ENCODE measurements at regions of chr4 and their contacts with region 1.

Region 1: DNA sequence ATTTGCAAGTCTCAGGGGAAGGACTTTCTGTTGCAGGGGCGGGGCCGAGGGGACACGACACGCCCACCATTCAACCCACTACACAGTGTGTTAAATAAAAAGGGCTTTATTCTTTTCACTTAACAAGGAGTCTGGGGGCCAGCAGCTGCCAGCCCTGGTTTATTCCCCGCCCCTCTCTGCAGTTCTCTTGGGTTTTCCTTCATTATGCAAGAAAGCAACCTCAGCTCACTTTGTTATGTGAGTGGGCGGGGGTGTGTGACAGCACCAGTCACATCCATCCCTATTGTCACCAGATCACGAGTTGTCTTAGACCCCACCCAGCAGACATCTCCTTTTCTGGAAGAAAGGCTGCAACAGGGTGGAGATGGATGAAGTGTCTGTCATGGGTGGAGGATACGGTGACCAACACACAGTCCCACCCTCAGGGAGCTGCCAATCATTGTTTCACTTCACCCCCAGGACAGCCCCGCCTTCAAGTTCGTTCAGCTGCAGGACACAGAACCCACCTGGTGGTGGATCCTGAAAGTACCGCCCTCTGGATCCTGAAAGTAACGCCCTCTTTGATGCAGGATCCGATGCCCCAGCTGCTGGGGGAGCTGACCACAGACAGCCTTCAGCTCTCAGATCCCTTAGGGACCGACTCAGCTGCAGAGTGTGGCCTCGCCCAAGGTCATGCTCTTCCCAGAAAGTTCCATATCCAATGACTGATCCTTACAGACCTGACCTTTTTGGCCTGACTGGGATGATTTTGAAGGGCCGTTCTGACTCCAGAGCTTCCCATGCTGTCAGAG is 79.6 kb downstream of the SMIM20 start:
- DNase-seq: peak; percentile 96
- ATAC-seq: peak; percentile 94
- H3K4me3 Mint-ChIP-seq: peak overlapping the region; percentile 50
- H3K27ac Mint-ChIP-seq: peak overlapping the region; percentile 100
- H3K4me1 Mint-ChIP-seq: peaks cover 23% of the 10 kb centered on the region
- H3K27me3 Mint-ChIP-seq: peaks cover 4% of the 10 kb centered on the region; the same call in 1 of the 2 replicates
- CTCF ChIP-seq: peak; percentile 62; the same call in 1 of the 2 replicates

Region 2: GRCh38 chr4:25842229-25842845 is 151.3 kb before region 1 on chr4:
- CTCF ChIA-PET with region 1: interaction called, 14 read pairs
- POLR2A ChIA-PET with region 1: no interaction called
- DNase-seq: peak; percentile 55
- ATAC-seq: peak; percentile 70
- H3K4me3 Mint-ChIP-seq: no peak overlapping the region
- H3K27ac Mint-ChIP-seq: peak overlapping the region; percentile 90
- H3K4me1 Mint-ChIP-seq: peaks cover 54% of the 10 kb centered on the region
- H3K27me3 Mint-ChIP-seq: no peaks in the 10 kb centered on the region
- CTCF ChIP-seq: no peak

Region 3: DNA sequence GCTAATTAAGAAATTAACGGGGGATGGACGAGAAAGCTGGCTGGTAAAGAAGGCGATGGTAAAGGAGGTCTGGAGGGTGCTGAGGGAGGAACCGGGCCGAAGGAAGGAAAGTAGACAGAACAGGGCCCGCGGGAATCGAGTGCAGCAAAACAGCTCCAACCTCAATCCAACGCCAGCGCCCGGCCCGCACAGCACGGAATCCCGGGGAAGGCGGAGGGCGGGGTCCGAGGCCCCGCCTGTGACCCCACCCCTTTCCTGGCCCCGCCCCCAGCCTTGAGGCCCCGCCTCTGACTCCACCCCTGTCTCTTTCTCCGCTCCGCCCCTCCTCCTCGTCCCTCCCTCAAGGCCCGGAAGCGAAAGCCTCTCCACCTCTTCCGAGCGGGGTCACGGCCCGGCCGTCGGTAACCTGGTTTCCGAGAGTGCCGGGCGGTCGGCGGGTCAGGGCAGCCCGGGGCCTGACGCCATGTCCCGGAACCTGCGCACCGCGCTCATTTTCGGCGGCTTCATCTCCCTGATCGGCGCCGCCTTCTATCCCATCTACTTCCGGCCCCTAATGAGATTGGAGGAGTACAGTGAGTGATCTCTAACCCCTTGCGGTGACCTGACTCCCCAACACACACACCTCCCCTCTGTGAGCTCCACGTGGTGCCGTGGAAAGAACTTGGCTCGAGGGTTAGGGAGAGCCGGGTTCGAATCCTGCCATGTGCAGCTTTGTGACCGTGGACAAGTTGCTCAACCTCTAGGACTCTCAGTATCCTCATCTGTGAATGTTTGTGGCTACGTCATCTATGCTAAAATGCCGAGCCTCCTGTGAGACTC is 79.5 kb before region 1 on chr4 and contains the start of gene SMIM20:
- CTCF ChIA-PET with region 1: interaction called, 11 read pairs
- POLR2A ChIA-PET with region 1: interaction called, 4 read pairs
- DNase-seq: peak; percentile 84
- ATAC-seq: peak; percentile 95
- H3K4me3 Mint-ChIP-seq: peak within 1 kb of the TSS; percentile 98
- H3K27ac Mint-ChIP-seq: peak within 1 kb of the TSS; percentile 99
- H3K4me1 Mint-ChIP-seq: peaks cover 19% of the 10 kb centered on the region
- H3K27me3 Mint-ChIP-seq: peaks cover 31% of the 10 kb centered on the region
- CTCF ChIP-seq: no peak
- total RNA-seq, gene SMIM20: 39.4 to 48.5 TPM (median 45.3 TPM) in 3 replicates

Region 4: GRCh38 chr4:25970226-25970675 is 23.3 kb before region 1 on chr4:
- CTCF ChIA-PET with region 1: interaction called, 17 read pairs
- POLR2A ChIA-PET with region 1: interaction called, 4 read pairs
- DNase-seq: no peak
- ATAC-seq: peak; percentile 47
- H3K4me3 Mint-ChIP-seq: no peak overlapping the region
- H3K27ac Mint-ChIP-seq: no peak overlapping the region
- H3K4me1 Mint-ChIP-seq: peaks cover 18% of the 10 kb centered on the region
- H3K27me3 Mint-ChIP-seq: peaks cover under 1% of the 10 kb centered on the region
- CTCF ChIP-seq: no peak

Region 5: GRCh38 chr4:26161030-26161824 is 167.6 kb after region 1 on chr4:
- CTCF ChIA-PET with region 1: interaction called, 15 read pairs
- POLR2A ChIA-PET with region 1: no interaction called
- DNase-seq: peak; percentile 33
- ATAC-seq: peak; percentile 94
- H3K4me3 Mint-ChIP-seq: no peak overlapping the region
- H3K27ac Mint-ChIP-seq: no peak overlapping the region
- H3K4me1 Mint-ChIP-seq: peaks cover 16% of the 10 kb centered on the region
- H3K27me3 Mint-ChIP-seq: no peaks in the 10 kb centered on the region
- CTCF ChIP-seq: no peak